ENCODE measurements at regions of chr15 and their contacts with region 1.

Region 1: GRCh38 chr15:56918046-56918938 is at the start of gene TCF12:
- DNase-seq: peak; percentile 86 to 87
- ATAC-seq: peak; percentile 84
- H3K4me3 ChIP-seq: peak within 1 kb of the TSS; percentile 83 to 91 (median 87)
- H3K27ac ChIP-seq: peak within 1 kb of the TSS; percentile 90 to 94 (median 92)
- H3K4me1 ChIP-seq: peaks cover 40 to 44% of the 10 kb centered on the region in 2 donors
- H3K27me3 ChIP-seq: no peaks in the 10 kb centered on the region
- CTCF ChIP-seq: peak in 4 of 5 experiments; percentile 34 to 57 (median 51)
- POLR2A ChIP-seq: peak; percentile 56 to 81
- total RNA-seq, gene TCF12: 34.9 to 63.0 (median 51.4) TPM

Region 2: DNA sequence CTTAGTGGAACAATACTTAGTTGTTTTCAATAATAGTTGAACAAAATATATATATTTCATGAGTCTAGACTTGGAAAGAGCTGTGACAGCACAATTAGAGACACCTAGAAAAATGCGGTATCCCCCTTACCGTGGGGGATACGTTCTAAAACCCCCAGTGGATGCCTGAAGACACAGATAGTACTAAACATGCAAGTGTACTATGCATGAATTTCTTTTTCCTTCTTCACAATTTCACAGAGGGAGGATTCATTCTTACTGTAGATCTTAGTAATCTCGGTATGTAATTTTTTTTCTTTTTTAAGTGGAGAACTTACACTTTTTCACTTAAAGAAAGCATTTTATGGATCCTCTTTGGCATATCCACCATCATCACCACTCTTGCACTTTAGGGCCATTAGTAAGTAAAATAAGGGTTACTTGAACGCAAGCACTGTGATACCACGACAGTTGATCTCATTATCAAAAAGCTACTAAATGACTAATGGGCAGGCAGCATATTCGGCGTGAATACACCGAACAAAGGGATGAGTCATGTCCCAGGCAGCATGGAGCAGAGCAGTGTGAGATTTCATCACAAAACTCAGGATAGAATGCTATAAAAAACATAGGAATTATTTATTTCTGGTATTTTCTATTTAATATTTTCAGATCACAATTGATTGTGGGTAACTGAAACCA is 112.7 kb before region 1 on chr15:
- in situ Hi-C with region 1: no loop called
- intact Hi-C with region 1: no loop called
- DNase-seq: peak; percentile 20 to 30
- ATAC-seq: peak; percentile 91 to 97
- H3K4me3 ChIP-seq: peak overlapping the region; percentile 19 to 42 (median 34)
- H3K27ac ChIP-seq: peak overlapping the region in 2 of 4 donors; percentile 20 to 44
- H3K4me1 ChIP-seq: peaks cover 0 to 6% of the 10 kb centered on the region in 2 donors
- H3K27me3 ChIP-seq: no peaks in the 10 kb centered on the region
- CTCF ChIP-seq: no peak
- POLR2A ChIP-seq: no peak

Region 3: DNA sequence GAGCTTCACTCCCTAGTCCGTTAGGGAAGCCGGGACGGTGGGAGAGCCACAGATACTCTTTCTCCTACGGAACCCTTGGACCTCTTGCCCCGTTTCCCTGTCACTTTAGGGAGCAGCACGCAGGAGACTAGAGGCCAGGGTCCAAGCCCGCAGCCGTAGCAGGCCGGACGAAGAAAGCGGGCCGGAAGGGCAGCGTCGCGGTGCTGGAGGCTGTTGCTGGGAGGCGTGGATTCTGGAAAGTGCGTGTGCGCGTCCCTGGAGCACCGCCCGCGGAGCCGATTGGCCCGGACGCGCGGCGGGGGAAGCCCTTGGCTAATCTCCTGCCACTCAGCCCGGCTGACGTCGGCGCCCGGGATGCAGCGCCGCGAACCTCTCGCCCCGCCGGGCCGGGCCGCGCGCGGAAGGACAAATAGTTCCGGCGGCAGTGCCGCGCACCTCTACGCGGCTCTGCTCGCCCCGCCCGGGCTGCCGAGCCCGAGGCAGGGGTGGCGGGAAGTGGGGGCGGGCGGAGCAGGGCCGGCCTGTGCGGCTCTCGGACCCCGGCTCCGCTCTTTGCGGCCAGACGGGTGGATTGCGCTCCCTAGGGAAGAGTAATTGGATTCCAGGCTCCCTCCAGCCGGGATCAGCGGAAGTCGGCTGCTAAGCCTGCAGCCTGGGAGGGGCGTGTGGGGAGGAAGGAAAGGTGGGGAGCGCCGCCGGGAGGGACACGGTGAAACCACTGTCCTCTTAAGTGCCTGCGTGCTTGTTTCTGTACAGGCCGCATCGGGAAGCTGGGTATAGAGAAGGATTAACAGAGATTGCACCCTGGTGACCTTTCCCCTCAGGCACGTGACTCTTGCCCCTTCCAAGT is 31.1 kb before region 1 on chr15:
- in situ Hi-C with region 1: loop called in 2 of 4 experiments (anchors 5 kb)
- intact Hi-C with region 1: loop called (anchors 1 kb)
- DNase-seq: peak; percentile 89 to 92
- ATAC-seq: peak; percentile 95
- H3K4me3 ChIP-seq: peak overlapping the region; percentile 73 to 80 (median 76)
- H3K27ac ChIP-seq: peak overlapping the region; percentile 93 to 98 (median 94)
- H3K4me1 ChIP-seq: peaks cover 13% of the 10 kb centered on the region in 2 donors
- H3K27me3 ChIP-seq: no peaks in the 10 kb centered on the region
- CTCF ChIP-seq: peak in 1 of 5 experiments; percentile 21
- POLR2A ChIP-seq: peak; percentile 74 to 76

Region 4: DNA sequence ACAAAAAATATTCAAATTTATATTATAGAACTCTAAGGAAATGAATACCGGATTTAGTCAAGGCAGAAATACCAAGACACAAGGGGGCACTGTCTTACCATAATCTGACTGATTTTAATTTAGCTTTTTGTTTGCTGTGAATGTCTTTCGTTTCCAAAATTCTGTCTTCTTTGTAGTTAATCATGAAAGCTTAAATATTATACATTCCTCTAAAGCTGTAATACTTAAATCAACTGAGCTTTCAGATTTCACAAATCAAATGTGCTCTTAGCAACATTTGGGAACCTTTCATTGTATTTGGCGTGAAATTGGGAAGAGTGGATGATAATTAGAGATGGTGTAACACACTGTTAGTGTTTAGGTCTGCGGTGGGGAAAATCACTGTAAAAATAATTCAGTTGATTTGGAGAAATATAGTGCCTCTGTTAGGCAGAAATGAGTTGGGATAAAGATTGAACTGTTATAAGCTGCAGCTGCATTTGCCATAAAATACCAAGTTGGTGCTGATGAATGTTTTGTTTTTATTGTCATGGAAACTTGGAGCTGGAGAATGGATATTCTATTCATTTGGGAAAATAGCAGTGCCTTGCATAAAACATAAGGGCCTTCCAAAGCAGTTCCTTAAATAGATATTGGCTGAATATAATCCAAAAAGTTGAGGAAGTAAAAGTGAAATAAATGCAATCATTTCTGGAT is 228.4 kb after region 1 on chr15:
- in situ Hi-C with region 1: loop called in 3 of 4 experiments (anchors 25 kb)
- intact Hi-C with region 1: no loop called
- DNase-seq: no peak
- ATAC-seq: peak in 1 of 2 donors; percentile 33
- H3K4me3 ChIP-seq: peak overlapping the region in 3 of 4 donors; percentile 22 to 42 (median 31)
- H3K27ac ChIP-seq: peak overlapping the region in 1 of 4 donors; percentile 2
- H3K4me1 ChIP-seq: peaks cover 37 to 39% of the 10 kb centered on the region in 2 donors
- H3K27me3 ChIP-seq: no peaks in the 10 kb centered on the region
- CTCF ChIP-seq: peak; percentile 51 to 79 (median 62)
- POLR2A ChIP-seq: no peak

Region 5: DNA sequence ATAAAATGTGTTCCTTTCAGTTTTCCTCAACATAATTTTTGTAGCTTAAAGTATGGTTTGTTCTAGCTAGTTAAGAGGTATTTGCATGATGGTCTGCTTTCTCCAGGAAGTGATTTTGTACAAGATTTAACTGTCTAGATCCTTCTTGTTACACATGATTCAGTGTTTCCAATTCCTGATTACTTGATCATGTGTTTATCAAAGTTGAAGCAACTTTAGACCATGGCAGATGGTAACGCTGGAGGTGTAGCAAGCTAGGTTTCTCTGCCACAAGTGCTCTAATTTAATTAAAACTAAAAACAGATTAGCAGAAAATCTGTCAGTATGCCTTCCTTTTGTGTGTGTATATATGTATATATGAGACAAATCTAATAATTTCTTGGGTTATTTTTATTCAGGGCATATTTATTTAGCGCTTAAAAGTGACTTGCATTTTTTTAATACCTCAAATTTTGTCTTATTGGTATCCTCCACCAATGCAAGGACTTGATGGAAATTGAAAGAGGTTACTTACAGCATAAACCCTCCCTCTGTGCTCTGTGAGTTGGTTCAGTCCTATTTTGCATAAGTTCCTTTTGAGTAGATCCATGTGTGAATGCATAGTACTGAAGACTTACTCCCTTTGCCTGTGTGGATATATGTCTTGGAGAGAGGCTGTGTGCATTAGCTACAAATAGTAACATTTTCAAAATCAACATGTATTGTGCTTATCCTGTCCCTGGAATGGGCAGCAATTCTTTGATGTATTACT is 300.7 kb after region 1 on chr15:
- in situ Hi-C with region 1: loop called in 1 of 4 experiments (anchors 10 kb)
- intact Hi-C with region 1: loop called (anchors 5 kb)
- DNase-seq: no peak
- ATAC-seq: no peak
- H3K4me3 ChIP-seq: peak overlapping the region in 2 of 4 donors; percentile 5 to 14
- H3K27ac ChIP-seq: peak overlapping the region in 2 of 4 donors; percentile 0 to 39
- H3K4me1 ChIP-seq: peaks cover 60 to 67% of the 10 kb centered on the region in 2 donors
- H3K27me3 ChIP-seq: no peaks in the 10 kb centered on the region
- CTCF ChIP-seq: no peak
- POLR2A ChIP-seq: no peak

Measured in gastrocnemius medialis (tissue), 4 donors.